ENCODE measurements at regions of chr17 and their contacts with region 1.

Region 1: GRCh38 chr17:55576996-55577586 is 65.8 kb upstream of the SMIM36 start:
- DNase-seq: peak; percentile 28
- ATAC-seq: peak; percentile 78
- H3K4me3 Mint-ChIP-seq: no peak overlapping the region
- H3K27ac Mint-ChIP-seq: no peak overlapping the region
- H3K4me1 Mint-ChIP-seq: peaks cover 23% of the 10 kb centered on the region
- H3K27me3 Mint-ChIP-seq: no peaks in the 10 kb centered on the region
- CTCF ChIP-seq: no peak

Region 2: DNA sequence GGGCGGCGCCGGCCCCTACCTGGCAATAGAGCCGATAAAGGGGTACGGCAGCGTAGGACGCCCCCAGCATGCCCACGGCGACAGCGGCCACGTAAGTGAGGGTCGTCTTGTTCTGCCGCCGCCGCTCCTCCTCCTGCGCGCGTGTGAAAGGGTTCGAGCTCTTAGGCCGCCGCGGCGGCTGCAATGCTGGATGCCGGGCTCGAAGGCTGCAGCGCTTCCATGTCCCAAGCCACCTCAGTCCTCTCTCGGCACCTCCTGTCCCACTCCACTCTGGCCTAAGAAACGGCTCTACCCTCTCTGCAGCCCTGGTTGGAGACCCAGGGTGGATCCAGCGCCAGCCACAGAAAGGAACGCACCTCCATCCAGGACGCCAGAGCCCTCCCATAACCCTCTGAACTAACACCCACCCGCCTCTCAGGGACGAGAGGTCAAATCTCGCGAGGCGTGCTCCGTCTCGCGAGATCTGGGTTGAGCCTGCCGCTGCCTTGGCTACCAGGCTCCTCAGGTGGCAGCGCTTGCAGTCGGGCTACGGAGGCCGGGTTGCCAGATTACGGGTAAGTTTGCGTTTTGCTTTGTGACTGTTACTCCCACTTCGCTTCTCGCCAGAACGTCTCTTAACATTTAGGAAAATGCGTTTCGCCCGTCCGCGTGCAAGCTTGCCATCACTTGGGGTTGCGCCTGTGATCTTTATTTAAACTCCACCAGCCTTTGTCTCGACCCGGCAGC is 608.7 kb before region 1 on chr17 and contains the starts of genes COX11 and STXBP4:
- CTCF ChIA-PET with region 1: no interaction called
- POLR2A ChIA-PET with region 1: no interaction called
- intact Hi-C with region 1: loop called (anchors 2 kb)
- DNase-seq: peak; percentile 90
- ATAC-seq: peak; percentile 97
- H3K4me3 Mint-ChIP-seq: no peak within 1 kb of the TSS
- H3K27ac Mint-ChIP-seq: no peak within 1 kb of the TSS
- H3K4me1 Mint-ChIP-seq: peaks cover 24% of the 10 kb centered on the region
- H3K27me3 Mint-ChIP-seq: no peaks in the 10 kb centered on the region
- CTCF ChIP-seq: no peak
- total RNA-seq, gene COX11: 38.5 and 46.5 TPM in 2 replicates
- total RNA-seq, gene STXBP4: 6.9 and 9.5 TPM in 2 replicates

Region 3: DNA sequence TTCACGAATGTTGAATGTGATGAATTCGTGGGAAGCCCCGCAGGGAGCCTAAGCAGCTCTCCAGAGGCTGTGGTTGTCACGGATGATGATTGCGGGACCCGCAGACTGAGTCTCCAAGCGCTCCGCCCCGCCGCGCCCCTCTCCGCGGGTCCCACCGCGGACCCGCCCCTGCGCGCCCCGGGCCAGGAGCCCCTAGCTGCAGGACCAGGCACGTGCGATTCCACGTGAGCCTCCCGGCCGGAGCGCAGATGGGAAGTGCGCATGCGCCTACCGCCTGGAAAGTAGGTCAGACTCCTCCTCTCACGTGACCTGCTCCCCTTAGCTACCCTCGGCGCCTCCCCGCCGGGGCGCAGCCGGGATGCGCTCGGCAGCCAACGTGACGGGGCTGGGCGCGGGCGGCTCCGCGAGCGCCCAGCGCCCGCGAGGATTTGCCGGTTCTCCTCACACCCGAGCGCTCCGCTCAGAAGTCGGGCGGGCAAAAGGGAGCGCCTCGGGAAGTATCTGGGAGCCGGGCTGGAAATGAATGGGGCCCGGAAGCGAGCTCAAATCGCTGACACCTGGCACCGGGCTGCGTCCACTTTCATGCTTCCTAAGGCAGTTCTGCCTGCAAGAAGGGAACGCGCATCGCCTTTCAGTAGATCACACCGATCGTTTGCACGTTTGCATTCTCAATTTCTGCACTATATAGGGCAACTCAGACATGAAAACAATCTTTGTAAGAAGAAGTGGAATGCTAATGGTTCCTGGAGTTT is 338.7 kb before region 1 on chr17:
- CTCF ChIA-PET with region 1: no interaction called
- POLR2A ChIA-PET with region 1: no interaction called
- intact Hi-C with region 1: loop called (anchors 5 kb)
- DNase-seq: peak; percentile 62
- ATAC-seq: peak; percentile 84
- H3K4me3 Mint-ChIP-seq: peak overlapping the region; percentile 79
- H3K27ac Mint-ChIP-seq: no peak overlapping the region
- H3K4me1 Mint-ChIP-seq: peaks cover 35% of the 10 kb centered on the region
- H3K27me3 Mint-ChIP-seq: peaks cover 24% of the 10 kb centered on the region
- CTCF ChIP-seq: no peak

Region 4: DNA sequence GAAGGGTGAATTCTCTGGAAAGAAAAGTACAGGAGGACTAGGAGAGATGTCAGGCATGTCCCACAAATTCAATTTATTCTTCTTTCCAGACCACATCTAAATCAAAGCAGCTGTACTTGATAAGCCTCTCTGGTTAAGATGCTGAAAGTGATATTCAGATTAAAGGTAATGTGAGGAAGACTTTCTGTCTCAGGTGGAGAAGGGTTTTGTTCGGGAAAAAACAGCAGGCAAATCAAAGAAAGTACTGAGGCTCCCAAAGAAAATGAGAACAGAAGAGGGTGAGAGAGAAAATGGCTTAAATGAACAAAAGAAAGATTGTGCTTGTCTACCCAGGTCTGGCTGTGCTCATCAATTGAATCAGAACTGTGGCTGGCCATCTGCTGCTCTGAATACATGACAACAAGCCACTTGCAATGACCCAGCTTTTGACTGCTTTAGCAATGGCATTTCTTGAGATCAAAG is 211.0 kb before region 1 on chr17:
- CTCF ChIA-PET with region 1: no interaction called
- POLR2A ChIA-PET with region 1: no interaction called
- intact Hi-C with region 1: no loop called
- DNase-seq: no peak
- ATAC-seq: no peak
- H3K4me3 Mint-ChIP-seq: no peak overlapping the region
- H3K27ac Mint-ChIP-seq: no peak overlapping the region
- H3K4me1 Mint-ChIP-seq: peaks cover 2% of the 10 kb centered on the region
- H3K27me3 Mint-ChIP-seq: peaks cover 7% of the 10 kb centered on the region
- CTCF ChIP-seq: no peak

Region 5: DNA sequence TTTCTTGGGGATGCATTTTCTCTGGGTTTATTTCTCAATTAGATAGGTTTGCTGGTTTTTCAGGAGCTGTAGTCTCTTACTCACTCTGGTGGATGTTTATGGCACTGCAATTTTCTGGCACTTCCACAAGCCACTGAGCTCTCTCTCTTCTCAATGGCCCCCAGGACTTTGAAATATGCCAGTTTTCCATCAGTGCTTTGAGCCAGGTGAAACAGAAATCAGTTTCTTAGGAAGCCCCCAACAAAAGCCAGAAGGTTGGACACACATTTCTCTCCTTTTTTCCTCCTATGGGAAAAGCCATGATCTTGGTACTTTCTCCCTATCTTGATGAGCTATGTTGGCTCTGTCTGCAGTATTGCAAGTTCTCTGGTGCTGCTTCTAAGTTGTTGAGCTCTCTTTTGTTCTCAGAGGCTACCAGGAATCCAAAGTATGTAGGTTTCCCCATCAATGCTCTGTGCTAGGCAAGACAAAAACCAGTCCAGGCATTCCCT is 24.8 kb after region 1 on chr17:
- CTCF ChIA-PET with region 1: interaction called, 6 read pairs
- POLR2A ChIA-PET with region 1: interaction called, 5 read pairs
- intact Hi-C with region 1: loop called (anchors 2 kb)
- DNase-seq: no peak
- ATAC-seq: peak; percentile 75
- H3K4me3 Mint-ChIP-seq: no peak overlapping the region
- H3K27ac Mint-ChIP-seq: no peak overlapping the region
- H3K4me1 Mint-ChIP-seq: no peaks in the 10 kb centered on the region
- H3K27me3 Mint-ChIP-seq: peaks cover 4% of the 10 kb centered on the region
- CTCF ChIP-seq: no peak

Region 6: GRCh38 chr17:55750750-55751657 is 173.9 kb after region 1 on chr17 and contains the start of gene PCTP:
- CTCF ChIA-PET with region 1: no interaction called
- POLR2A ChIA-PET with region 1: no interaction called
- intact Hi-C with region 1: loop called (anchors 1 kb)
- DNase-seq: peak; percentile 80
- ATAC-seq: peak; percentile 98
- H3K4me3 Mint-ChIP-seq: peak within 1 kb of the TSS; percentile 84
- H3K27ac Mint-ChIP-seq: no peak within 1 kb of the TSS
- H3K4me1 Mint-ChIP-seq: peaks cover 14% of the 10 kb centered on the region
- H3K27me3 Mint-ChIP-seq: peaks cover 5% of the 10 kb centered on the region
- CTCF ChIP-seq: no peak
- total RNA-seq, gene PCTP: 8.0 and 9.0 TPM in 2 replicates

Region 7: DNA sequence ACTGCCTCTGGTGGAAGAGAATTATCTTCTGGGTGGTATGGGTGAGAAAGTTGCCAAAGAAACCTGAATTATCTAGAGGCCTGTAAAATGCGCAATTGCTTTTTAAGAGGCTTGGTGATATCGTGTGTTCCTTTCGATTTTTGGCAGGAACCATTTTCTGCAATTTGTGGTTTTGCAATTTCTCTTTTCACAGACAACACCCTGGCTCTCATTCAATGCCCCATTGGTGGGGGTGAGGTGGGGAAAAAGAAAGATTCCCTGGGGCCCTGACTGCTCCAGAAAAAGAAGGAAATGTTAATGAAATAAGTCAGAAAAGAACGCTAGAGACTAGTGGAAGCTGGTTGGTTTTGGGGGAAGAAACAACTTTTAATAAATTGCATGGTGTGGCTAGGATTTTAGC is 653.6 kb after region 1 on chr17:
- CTCF ChIA-PET with region 1: no interaction called
- POLR2A ChIA-PET with region 1: no interaction called
- intact Hi-C with region 1: no loop called
- DNase-seq: no peak
- ATAC-seq: no peak
- H3K4me3 Mint-ChIP-seq: no peak overlapping the region
- H3K27ac Mint-ChIP-seq: no peak overlapping the region
- H3K4me1 Mint-ChIP-seq: no peaks in the 10 kb centered on the region
- H3K27me3 Mint-ChIP-seq: no peaks in the 10 kb centered on the region
- CTCF ChIP-seq: no peak

Measured in activated B cell treated with CpG ODN at 0.5 μM for 24 hours (primary cell).